Right ventricle myocardium inferior (tissue), 1 donor: ENCODE measurements at regions of chr1 and their contacts with region 1.

Region 1: GRCh38 chr1:35557292-35558063 is at the starts of genes KIAA0319L and NCDN:
- DNase-seq: peak; percentile 98
- ATAC-seq: peak; percentile 96
- total RNA-seq, gene KIAA0319L: 67.7 TPM
- total RNA-seq, gene NCDN: 22.8 TPM

Region 2: DNA sequence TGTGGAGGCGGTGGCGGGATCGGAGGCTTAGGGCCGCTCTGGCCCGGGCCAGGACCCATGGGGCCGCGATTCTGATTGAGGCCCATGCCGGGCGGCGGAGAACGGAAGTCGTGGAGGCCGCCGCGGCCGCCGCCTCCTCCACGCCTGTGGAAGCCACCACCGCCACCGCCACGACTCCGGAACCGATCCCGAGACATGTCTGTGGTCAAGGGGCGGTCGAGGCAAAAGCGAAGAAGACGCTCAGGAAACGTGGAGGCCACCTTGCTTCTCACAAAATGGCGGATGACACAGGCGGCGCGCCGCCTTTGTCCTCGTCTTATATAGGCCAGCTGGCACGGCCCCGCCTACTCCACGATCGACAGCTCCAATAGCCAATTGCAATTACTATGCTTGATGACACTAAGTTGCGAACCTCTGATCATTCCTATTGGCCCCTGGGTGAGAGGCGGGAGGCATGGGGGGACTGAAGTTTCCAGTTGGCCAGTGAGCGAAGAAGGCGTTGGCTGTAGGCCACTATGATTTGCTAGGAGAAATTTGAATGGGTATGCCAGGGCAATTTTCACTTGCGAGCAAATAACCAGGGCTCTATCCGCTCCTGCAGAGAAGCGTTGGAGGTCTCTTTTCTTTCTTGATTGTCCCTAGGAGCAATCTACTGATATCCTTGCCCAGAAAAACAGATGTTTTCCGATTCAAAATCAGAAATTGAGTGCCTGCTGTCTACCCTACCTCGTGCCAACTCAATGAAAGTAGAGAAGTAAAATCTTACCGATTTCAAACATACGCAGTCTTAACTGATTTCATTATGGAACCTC is 364.4 kb before region 1 on chr1 and contains the start of gene SFPQ:
- intact Hi-C with region 1: loop called (anchors 10 kb)
- DNase-seq: peak; percentile 96
- ATAC-seq: peak; percentile 97
- total RNA-seq, gene SFPQ: 79.2 TPM

Region 3: GRCh38 chr1:35350872-35351271 is 206.6 kb before region 1 on chr1:
- intact Hi-C with region 1: no loop called
- DNase-seq: no peak
- ATAC-seq: no peak